ENCODE measurements at regions of chr20 and their contacts with region 1.

Region 1: DNA sequence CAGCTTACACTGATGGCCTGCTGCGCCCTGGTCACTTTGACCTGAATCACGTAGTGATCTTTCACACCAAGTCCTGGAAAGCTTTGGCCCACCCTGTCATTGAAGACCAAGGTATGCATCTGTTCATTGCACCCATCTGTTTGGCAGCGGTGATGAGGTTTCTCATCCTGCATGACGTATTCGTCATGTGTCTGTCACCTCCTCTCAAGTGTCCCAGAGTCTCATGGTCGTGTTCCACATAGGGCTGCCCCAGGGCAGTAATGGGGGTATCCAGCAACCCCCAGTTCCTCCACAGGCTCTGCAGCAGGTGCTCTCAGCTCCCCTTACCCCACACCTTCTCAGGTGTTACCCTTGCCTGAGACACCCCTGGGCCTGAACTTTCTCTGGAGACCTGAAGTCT is 104.1 kb downstream of the SYNDIG1 start:
- DNase-seq: no peak
- ATAC-seq: no peak
- H3K4me3 ChIP-seq: no peak overlapping the region
- H3K27ac ChIP-seq: no peak overlapping the region
- H3K4me1 ChIP-seq: no peaks in the 10 kb centered on the region
- H3K27me3 ChIP-seq: no peaks in the 10 kb centered on the region; the same call in 1 of the 2 replicates
- CTCF ChIP-seq: no peak

Region 2: GRCh38 chr20:24545168-24545567 is 28.4 kb before region 1 on chr20:
- CTCF ChIA-PET with region 1: no interaction called
- POLR2A ChIA-PET with region 1: no interaction called
- in situ Hi-C with region 1: no loop called
- intact Hi-C with region 1: no loop called
- DNase-seq: no peak
- ATAC-seq: no peak
- H3K4me3 ChIP-seq: no peak overlapping the region
- H3K27ac ChIP-seq: no peak overlapping the region
- H3K4me1 ChIP-seq: no peaks in the 10 kb centered on the region
- H3K27me3 ChIP-seq: peaks cover 8% of the 10 kb centered on the region; the same call in 1 of the 2 replicates
- CTCF ChIP-seq: no peak

Region 3: DNA sequence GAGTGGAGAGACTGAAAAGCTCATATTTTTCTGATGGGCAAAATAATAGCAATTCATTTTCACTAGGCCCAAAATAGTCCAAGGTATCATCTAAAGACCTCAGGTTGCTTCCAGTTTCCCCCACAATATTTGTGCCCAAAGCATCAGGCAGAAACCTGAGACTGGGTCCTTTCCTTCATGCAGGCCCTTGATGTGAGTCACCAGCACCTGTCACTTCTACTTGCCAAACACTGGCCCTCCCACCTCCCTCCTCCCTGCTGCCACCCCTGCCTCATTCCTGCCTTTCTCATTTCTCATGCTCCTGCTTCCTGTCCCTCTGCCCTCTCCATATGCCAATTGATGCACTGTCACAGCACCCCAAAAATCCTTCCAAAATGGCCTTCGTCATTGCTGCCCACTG is 145.1 kb after region 1 on chr20:
- CTCF ChIA-PET with region 1: no interaction called
- POLR2A ChIA-PET with region 1: interaction called, 11 read pairs
- in situ Hi-C with region 1: no loop called
- intact Hi-C with region 1: no loop called
- DNase-seq: no peak
- ATAC-seq: no peak
- H3K4me3 ChIP-seq: no peak overlapping the region
- H3K27ac ChIP-seq: no peak overlapping the region
- H3K4me1 ChIP-seq: no peaks in the 10 kb centered on the region
- H3K27me3 ChIP-seq: peaks cover 14% of the 10 kb centered on the region
- CTCF ChIP-seq: no peak